ENCODE measurements at regions of chr20 and their contacts with region 1.

Region 1: GRCh38 chr20:50115591-50116372 is 2.8 kb upstream of the UBE2V1 start:
- DNase-seq: peak; percentile 86
- H3K4me3 Mint-ChIP-seq: peak overlapping the region; percentile 100
- H3K27ac Mint-ChIP-seq: peak overlapping the region; percentile 88
- H3K4me1 Mint-ChIP-seq: peaks cover 45% of the 10 kb centered on the region
- H3K27me3 Mint-ChIP-seq: no peaks in the 10 kb centered on the region

Region 2: DNA sequence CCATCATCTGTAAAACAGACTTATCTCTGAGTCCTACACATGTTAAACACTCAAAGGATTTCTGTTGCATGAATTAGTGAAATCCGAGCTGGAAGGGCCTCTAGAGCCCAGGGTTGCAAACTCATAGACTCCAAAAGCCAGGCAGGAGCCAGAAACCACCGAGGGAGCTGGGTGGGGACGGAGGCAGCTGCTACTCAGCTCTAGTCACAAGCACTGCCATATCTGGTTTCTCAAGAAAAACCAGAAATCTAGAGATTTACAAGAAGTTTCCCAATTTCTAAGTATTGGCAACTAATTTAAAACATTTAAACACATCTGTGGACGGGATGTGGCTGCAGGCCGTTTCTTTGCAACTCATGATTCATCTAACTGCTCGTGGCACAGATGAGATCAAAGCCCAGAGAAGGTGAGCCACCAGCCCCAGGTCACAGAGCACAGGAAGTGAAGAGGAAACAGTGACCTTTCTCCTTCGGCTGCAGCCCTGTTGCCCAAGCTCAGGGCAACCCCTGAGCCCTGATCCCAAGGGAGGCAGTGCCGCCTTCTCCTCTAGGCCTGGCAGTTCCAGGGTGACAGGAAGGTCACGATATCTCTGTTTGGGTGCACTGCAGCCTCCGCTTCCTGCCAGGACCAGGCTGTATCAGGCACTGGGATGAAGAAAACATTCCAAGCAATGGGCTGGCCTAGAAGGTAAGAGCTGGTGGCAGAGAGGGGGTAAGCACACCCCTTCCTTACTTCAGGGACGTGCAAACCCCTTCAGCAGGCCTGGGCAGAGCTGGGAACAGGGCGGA is 521.4 kb before region 1 on chr20:
- intact Hi-C with region 1: loop called (anchors 10 kb)
- DNase-seq: peak; percentile 76
- H3K4me3 Mint-ChIP-seq: peak overlapping the region; percentile 81
- H3K27ac Mint-ChIP-seq: peak overlapping the region; percentile 99
- H3K4me1 Mint-ChIP-seq: peaks cover 90% of the 10 kb centered on the region
- H3K27me3 Mint-ChIP-seq: no peaks in the 10 kb centered on the region

Region 3: DNA sequence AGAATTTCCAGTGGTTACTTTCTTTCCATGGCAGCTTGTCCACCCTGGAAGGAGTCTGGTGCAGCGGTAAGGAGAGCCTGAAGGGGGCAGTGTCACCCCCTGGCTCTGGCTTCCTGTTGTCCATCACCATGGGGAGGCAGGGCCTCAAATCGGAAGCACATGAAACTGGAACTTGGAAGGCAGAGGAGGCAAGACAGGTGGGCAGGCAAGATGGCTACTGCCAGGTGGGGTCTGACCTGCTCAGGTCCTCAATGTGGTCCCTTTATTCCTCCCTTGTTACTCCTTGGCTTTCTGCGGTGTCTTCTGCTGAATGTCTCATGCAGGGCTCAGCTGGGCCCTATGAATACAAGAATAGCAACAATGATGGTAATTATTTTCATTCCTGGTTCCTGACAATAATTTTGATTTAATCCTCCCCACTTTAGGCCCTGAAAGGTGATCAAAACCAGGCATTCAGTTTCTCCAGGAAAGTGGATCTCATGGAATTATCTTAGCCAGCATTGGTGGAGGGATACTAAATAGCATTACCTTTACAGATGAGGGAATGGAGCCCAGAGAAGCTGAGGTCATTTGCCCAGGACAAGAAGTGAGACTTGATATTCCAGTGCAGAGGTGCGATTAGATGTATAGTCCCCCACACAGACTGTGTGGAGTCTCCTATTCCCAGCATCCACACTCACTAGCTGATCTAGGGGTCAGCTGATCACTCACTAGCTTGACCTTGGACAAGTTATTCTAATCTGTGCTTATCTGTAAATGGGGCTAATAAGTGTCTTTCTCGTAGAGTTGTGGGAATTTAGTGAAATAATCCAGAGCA is 150.6 kb before region 1 on chr20:
- intact Hi-C with region 1: no loop called
- DNase-seq: no peak
- H3K4me3 Mint-ChIP-seq: no peak overlapping the region
- H3K27ac Mint-ChIP-seq: no peak overlapping the region
- H3K4me1 Mint-ChIP-seq: no peaks in the 10 kb centered on the region
- H3K27me3 Mint-ChIP-seq: peaks cover 2% of the 10 kb centered on the region

Region 4: DNA sequence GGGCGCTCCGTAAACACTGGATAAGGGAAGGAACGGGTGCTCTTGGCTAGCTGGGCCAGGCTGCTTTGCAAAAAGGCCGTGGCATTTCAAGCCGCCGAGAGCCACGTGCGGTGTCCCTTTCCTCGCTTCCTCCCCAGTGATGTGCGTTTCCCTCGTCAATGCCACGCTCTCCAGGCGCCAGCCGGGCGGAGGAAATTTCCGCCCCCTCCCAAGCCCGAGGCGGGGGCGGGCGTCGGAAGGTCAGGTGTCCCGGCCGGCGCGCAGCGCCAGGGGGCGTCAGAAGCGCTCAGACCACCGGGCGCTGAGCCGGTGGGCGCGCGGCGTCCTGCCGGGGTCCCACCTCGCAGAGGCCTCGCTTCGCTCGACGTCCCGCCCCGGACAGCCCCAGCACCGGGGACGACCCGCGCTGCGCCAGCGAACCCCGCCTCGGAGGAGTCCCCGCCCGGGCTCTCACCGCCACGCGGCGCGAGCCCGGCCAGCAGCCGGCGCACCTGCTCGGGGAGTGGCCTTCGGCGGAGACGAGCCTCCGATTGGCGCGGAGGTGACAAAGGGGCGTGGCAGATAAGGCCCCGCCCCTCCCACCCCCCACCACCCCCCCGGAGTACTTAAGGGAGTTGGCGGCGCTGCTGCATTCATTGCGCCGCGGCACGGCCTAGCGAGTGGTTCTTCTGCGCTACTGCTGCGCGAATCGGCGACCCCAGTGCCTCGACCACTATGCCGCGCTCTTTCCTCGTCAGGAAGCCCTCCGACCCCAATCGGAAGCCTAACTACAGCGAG is 133.2 kb before region 1 on chr20 and contains the start of gene SNAI1:
- intact Hi-C with region 1: loop called (anchors 1 kb)
- DNase-seq: peak; percentile 79
- H3K4me3 Mint-ChIP-seq: peak within 1 kb of the TSS; percentile 59
- H3K27ac Mint-ChIP-seq: peak within 1 kb of the TSS; percentile 67
- H3K4me1 Mint-ChIP-seq: peaks cover 4% of the 10 kb centered on the region
- H3K27me3 Mint-ChIP-seq: peaks cover 26% of the 10 kb centered on the region
- total RNA-seq, gene SNAI1: 3.5 and 3.9 TPM in 2 replicates

Region 5: GRCh38 chr20:50169329-50169831 is 53.6 kb after region 1 on chr20:
- intact Hi-C with region 1: loop called (anchors 2 kb)
- DNase-seq: peak; percentile 64
- H3K4me3 Mint-ChIP-seq: no peak overlapping the region
- H3K27ac Mint-ChIP-seq: no peak overlapping the region
- H3K4me1 Mint-ChIP-seq: peaks cover 19% of the 10 kb centered on the region
- H3K27me3 Mint-ChIP-seq: peaks cover 13% of the 10 kb centered on the region

Region 6: GRCh38 chr20:50509935-50510705 is 394.3 kb after region 1 on chr20 and contains the start of gene PTPN1:
- intact Hi-C with region 1: loop called (anchors 2 kb)
- DNase-seq: peak; percentile 99
- H3K4me3 Mint-ChIP-seq: peak within 1 kb of the TSS; percentile 93
- H3K27ac Mint-ChIP-seq: peak within 1 kb of the TSS; percentile 91
- H3K4me1 Mint-ChIP-seq: peaks cover 48% of the 10 kb centered on the region
- H3K27me3 Mint-ChIP-seq: no peaks in the 10 kb centered on the region
- total RNA-seq, gene PTPN1: 60.0 and 60.5 TPM in 2 replicates

Measured in activated T-helper 1 cell treated with anti-CD3 and anti-CD28 coated beads, Interleukin-12 subunit alpha, Interleukin-12 subunit beta, Interleukin-2, Interleukin-4 antibody, amounts not matched to agents 30 ng/mL and 10 ng/mL and 1 ng/mL, durations not matched to agents 14 hours and 24 hours and 36 hours (primary cell).